ENCODE measurements at regions of chr3 and their contacts with region 1.

Region 1: GRCh38 chr3:153209596-153209995 is 47.6 kb downstream of the RAP2B start:
- DNase-seq: peak; percentile 92
- ATAC-seq: peak; percentile 98
- H3K4me3 ChIP-seq: peak overlapping the region; percentile 21; the same call in 1 of the 2 replicates
- H3K27ac ChIP-seq: peak overlapping the region; percentile 79
- H3K4me1 ChIP-seq: peaks cover 20% of the 10 kb centered on the region
- H3K27me3 ChIP-seq: no peaks in the 10 kb centered on the region
- CTCF ChIP-seq: no peak

Region 2: DNA sequence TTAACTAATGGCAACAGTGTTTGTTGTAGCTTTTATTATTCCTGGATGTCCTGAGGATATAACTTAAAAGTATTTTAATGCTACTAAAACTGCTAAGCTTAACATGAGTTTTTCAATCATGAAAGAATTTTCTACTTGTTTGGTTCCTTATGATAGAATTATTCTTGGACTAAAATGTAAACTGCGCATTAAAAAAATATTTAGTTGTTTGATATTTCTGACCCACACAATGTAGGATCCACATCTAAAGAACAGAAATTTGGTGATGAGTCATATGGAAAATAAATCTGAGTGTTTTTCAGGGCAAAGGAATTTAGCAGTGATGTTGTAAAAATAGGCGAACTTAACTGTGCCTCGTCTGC is 23.3 kb after region 1 on chr3:
- CTCF ChIA-PET with region 1: no interaction called
- POLR2A ChIA-PET with region 1: no interaction called
- intact Hi-C with region 1: loop called (anchors 2 kb)
- DNase-seq: peak; percentile 77
- ATAC-seq: peak; percentile 83
- H3K4me3 ChIP-seq: no peak overlapping the region
- H3K27ac ChIP-seq: peak overlapping the region; percentile 40
- H3K4me1 ChIP-seq: peaks cover 24% of the 10 kb centered on the region
- H3K27me3 ChIP-seq: no peaks in the 10 kb centered on the region
- CTCF ChIP-seq: no peak

Region 3: GRCh38 chr3:153268564-153269279 is 59.1 kb after region 1 on chr3:
- CTCF ChIA-PET with region 1: no interaction called
- POLR2A ChIA-PET with region 1: no interaction called
- intact Hi-C with region 1: no loop called
- DNase-seq: no peak
- ATAC-seq: no peak
- H3K4me3 ChIP-seq: no peak overlapping the region
- H3K27ac ChIP-seq: no peak overlapping the region
- H3K4me1 ChIP-seq: no peaks in the 10 kb centered on the region
- H3K27me3 ChIP-seq: no peaks in the 10 kb centered on the region
- CTCF ChIP-seq: no peak

Measured in PC-3 (cell line).